ENCODE measurements at regions of chr15 and their contacts with region 1.

Region 1: DNA sequence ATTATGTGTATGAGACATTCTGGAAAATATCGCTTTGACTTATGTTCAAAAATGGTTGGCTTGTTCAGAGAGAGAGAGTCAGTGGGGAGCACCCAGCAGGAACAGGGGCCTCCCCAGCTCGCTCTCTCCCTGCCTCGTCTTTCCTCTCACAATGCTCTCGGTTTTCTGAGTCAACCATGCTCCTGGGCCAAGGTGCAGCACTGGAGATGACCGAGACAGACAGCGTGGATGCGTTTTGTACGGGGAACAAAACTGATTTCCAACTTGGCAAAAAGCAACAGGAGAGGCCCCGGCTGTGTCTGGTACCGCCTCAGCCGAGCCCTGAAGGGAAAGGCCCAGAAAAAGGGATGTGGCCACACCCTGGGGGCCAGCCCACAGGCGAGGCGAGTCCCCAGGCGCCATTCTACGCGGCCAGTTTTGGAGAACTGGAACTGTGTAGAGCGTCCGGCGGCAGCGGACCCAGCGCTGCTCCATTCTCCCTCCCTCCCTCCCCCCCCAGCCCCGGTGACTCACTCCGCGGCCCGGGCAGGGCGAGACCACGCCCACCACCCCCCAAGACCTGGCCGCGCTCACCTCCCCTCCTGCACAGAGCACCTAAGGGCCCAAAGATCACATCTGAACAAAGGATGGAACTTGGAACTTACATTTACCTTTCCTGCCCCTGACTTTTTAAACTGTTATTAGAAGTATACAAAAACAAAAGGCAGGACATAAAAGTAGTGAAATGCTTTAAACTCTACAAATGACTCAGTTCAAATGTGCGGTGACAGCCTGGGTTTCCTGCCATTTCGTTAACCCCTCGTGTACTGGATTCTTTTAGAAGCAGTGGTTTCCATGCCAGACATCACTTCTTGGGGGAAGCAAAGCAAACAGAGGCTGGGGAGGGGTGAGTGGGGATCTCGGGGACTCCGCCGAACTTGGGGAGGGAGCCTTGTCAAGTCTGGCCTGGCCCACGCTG is 12.7 kb downstream of the ATP10A start:
- DNase-seq: peak; percentile 89
- H3K4me3 Mint-ChIP-seq: peak overlapping the region; percentile 82
- H3K27ac Mint-ChIP-seq: peak overlapping the region; percentile 88
- H3K4me1 Mint-ChIP-seq: peaks cover 86% of the 10 kb centered on the region
- H3K27me3 Mint-ChIP-seq: no peaks in the 10 kb centered on the region

Region 2: DNA sequence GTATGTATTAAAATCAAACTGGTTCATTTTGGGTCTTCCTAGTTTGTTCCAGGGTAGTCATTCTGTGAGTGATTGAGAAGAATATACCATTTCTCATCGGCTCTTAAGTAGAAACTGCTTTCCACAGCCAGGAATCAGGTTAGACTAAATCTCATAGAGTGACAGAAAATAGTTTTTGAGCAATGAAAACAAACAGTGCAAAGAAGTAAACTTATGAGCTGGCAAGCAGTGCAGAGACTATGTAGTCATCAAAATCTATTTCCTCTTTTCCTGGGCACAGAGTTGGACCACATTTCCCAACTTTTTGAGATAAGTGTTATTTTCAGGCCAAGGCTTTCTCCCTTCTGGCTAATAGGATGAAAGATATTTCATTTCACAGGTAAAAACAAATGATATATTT is 478.1 kb before region 1 on chr15:
- CTCF ChIA-PET with region 1: no interaction called
- POLR2A ChIA-PET with region 1: no interaction called
- intact Hi-C with region 1: loop called (anchors 10 kb)
- DNase-seq: no peak
- H3K4me3 Mint-ChIP-seq: no peak overlapping the region
- H3K27ac Mint-ChIP-seq: no peak overlapping the region
- H3K4me1 Mint-ChIP-seq: peaks cover 25% of the 10 kb centered on the region
- H3K27me3 Mint-ChIP-seq: no peaks in the 10 kb centered on the region

Region 3: GRCh38 chr15:25811481-25811906 is 38.9 kb before region 1 on chr15:
- CTCF ChIA-PET with region 1: interaction called, 3 read pairs
- POLR2A ChIA-PET with region 1: interaction called, 4 read pairs
- intact Hi-C with region 1: loop called (anchors 2 kb)
- DNase-seq: no peak
- H3K4me3 Mint-ChIP-seq: peak overlapping the region; percentile 22
- H3K27ac Mint-ChIP-seq: peak overlapping the region; percentile 57
- H3K4me1 Mint-ChIP-seq: peaks cover 61% of the 10 kb centered on the region
- H3K27me3 Mint-ChIP-seq: no peaks in the 10 kb centered on the region

Region 4: GRCh38 chr15:25863111-25863967 is 12.9 kb after region 1 on chr15 and contains the start of gene ATP10A:
- CTCF ChIA-PET with region 1: interaction called, 8 read pairs
- POLR2A ChIA-PET with region 1: interaction called, 11 read pairs
- intact Hi-C with region 1: loop called (anchors 1 kb)
- DNase-seq: peak; percentile 66
- H3K4me3 Mint-ChIP-seq: peak within 1 kb of the TSS; percentile 90
- H3K27ac Mint-ChIP-seq: peak within 1 kb of the TSS; percentile 86
- H3K4me1 Mint-ChIP-seq: peaks cover 34% of the 10 kb centered on the region
- H3K27me3 Mint-ChIP-seq: no peaks in the 10 kb centered on the region
- total RNA-seq, gene ATP10A: 15.9 to 17.2 TPM

Measured in activated CD4-positive, alpha-beta memory T cell treated with anti-CD3 and anti-CD28 coated beads for 36 hours (primary cell).